GM12878 (cell line): ENCODE measurements at regions of chr2 and their contacts with region 1.

Region 1: GRCh38 chr2:96024336-96025193 is 10.2 kb downstream of the GPAT2 start:
- DNase-seq: no peak
- ATAC-seq: no peak
- H3K4me3 ChIP-seq: no peak overlapping the region
- H3K27ac ChIP-seq: no peak overlapping the region
- H3K4me1 ChIP-seq: no peaks in the 10 kb centered on the region
- H3K27me3 ChIP-seq: no peaks in the 10 kb centered on the region
- CTCF ChIP-seq: no peak
- EP300 ChIP-seq: no peak
- POLR2A ChIP-seq: no peak
- RAD21 ChIP-seq: no peak

Region 2: DNA sequence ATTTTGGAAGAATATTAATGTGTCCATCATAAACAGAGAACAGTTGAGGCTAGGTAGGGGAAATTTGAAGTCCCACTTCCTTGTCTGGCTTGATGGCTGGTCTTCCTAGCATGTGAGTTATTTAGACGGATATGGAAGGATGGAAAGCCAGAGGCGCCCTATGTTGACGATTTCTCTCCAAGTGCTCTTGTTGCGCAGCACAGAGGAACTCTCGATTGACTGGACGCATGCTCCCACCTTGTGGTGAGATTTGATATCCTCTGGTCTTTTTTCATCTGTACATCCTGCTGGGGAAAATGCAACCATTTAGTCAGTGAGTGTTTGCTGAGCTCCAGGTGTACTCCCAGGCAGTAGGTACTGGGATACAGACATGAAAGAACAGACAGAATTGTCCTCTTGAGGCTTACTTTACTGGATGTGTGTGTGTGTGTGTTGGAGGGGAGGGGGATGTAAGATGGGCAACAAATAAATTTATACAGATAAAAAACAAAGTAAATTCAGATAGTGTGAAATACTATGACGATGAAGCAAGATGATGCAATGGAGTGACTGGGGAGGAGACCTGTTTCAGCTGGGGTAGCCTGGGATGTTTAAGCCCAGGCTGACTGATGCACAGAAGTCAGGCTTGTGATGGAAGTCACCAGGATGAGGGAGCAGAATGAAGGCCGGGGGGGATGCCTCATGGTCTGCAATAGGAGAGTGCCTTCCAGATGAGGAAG is 295.5 kb before region 1 on chr2:
- CTCF ChIA-PET with region 1: no interaction called
- POLR2A ChIA-PET with region 1: no interaction called
- RAD21 ChIA-PET with region 1: no interaction called
- SMC1A ChIA-PET with region 1: no interaction called
- in situ Hi-C with region 1: no loop called
- intact Hi-C with region 1: no loop called
- DNase-seq: peak; percentile 17
- ATAC-seq: peak; percentile 86
- H3K4me3 ChIP-seq: no peak overlapping the region
- H3K27ac ChIP-seq: no peak overlapping the region
- H3K4me1 ChIP-seq: no peaks in the 10 kb centered on the region
- H3K27me3 ChIP-seq: no peaks in the 10 kb centered on the region
- CTCF ChIP-seq: peak; percentile 43 to 51 (median 50); a peak in 5 of 6 replicates
- EP300 ChIP-seq: no peak
- POLR2A ChIP-seq: no peak
- RAD21 ChIP-seq: peak; percentile 74

Region 3: DNA sequence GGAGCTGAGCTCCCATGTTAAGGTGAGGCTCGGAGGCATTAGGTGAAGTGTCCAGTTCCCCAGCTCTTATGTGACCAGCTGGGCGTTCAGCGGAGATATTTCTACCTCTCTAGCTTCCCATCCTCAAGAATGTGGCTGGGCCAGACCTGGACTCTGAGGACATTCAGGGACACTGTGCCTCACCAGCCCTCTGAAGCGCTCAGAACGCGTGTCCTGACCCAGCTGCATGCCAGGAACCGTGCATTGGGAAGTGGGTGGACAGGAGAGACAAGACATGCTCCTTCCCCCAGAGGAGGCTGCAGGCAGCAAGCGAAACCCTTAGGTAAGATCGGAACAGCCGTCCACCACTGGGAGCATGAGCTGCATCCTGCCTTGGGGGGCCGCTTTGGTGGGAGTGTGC is 48.2 kb after region 1 on chr2:
- CTCF ChIA-PET with region 1: interaction called, 4 read pairs
- POLR2A ChIA-PET with region 1: no interaction called
- RAD21 ChIA-PET with region 1: no interaction called
- SMC1A ChIA-PET with region 1: no interaction called
- in situ Hi-C with region 1: loop called (anchors 10 kb)
- intact Hi-C with region 1: no loop called
- DNase-seq: no peak
- ATAC-seq: no peak
- H3K4me3 ChIP-seq: no peak overlapping the region
- H3K27ac ChIP-seq: no peak overlapping the region
- H3K4me1 ChIP-seq: no peaks in the 10 kb centered on the region
- H3K27me3 ChIP-seq: no peaks in the 10 kb centered on the region; a peak in 1 of 4 replicates
- CTCF ChIP-seq: no peak
- EP300 ChIP-seq: no peak
- POLR2A ChIP-seq: no peak
- RAD21 ChIP-seq: no peak

Region 4: DNA sequence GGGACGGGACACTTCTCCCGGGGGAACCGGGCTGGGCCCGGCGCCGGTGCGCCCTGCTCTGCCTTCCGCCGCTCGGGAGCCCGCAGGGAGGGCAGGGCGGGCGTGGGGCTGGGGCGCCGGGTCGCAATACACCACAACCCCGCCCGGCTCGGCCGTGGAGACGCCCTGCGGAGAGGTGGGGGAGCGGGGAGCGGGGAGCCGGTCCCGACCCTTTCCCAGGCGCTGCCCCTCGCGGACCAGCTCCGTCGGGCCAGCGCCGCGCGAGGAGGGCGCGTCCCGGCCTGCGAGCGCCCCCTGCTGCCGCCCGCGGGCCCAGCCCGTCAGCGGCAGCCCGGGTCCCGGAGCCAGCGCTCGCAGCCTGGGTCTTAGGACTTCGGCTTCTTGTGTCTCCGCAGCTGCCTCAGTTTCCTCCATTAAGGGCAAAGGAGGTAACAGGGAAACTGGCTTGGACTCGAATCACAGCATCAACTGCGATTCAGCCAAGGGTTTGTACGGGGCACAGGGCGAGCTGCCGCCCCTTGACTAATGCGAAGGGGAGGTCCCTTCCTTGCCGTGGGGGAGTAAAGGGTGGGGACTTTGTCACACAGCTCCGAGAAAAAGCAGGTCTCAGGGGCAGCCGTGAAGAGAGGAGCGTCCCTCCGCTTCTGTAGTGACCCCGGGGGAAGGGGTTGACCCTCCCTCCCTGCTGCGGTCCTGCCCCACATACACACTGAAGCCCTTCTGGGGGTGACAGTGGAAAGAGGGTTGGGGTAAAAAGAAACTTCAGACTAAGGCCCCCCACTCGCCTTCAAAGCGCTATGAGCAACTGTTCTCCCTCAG is 92.5 kb after region 1 on chr2:
- CTCF ChIA-PET with region 1: interaction called, 10 read pairs
- POLR2A ChIA-PET with region 1: no interaction called
- RAD21 ChIA-PET with region 1: interaction called, 13 read pairs
- SMC1A ChIA-PET with region 1: interaction called, 4 read pairs
- in situ Hi-C with region 1: no loop called
- intact Hi-C with region 1: no loop called
- DNase-seq: no peak
- ATAC-seq: peak; percentile 91
- H3K4me3 ChIP-seq: peak overlapping the region; percentile 62
- H3K27ac ChIP-seq: no peak overlapping the region
- H3K4me1 ChIP-seq: peaks cover 10% of the 10 kb centered on the region
- H3K27me3 ChIP-seq: peaks cover 0 to 1% of the 10 kb centered on the region in 2 experiments; a peak in 2 of 4 replicates
- CTCF ChIP-seq: peak; percentile 60 to 88 (median 79); a peak in 5 of 6 replicates
- EP300 ChIP-seq: no peak
- POLR2A ChIP-seq: no peak
- RAD21 ChIP-seq: peak; percentile 76